CD4-positive, alpha-beta memory T cell (primary cell): ENCODE measurements at regions of chr15 and their contacts with region 1.

Region 1: GRCh38 chr15:99717161-99718009 is 15.9 kb downstream of the LYSMD4 start:
- DNase-seq: no peak
- H3K4me3 ChIP-seq: no peak overlapping the region
- H3K4me3 Mint-ChIP-seq: no peak overlapping the region
- H3K27ac ChIP-seq: no peak overlapping the region
- H3K27ac Mint-ChIP-seq: peak overlapping the region in 1 of 7 donors; percentile 24
- H3K4me1 ChIP-seq: peaks cover 23% of the 10 kb centered on the region
- H3K4me1 Mint-ChIP-seq: peaks cover 23 to 32% (median 29%) of the 10 kb centered on the region in 4 donors
- H3K27me3 ChIP-seq: no peaks in the 10 kb centered on the region
- H3K27me3 Mint-ChIP-seq: no peaks in the 10 kb centered on the region

Region 2: GRCh38 chr15:99733268-99734039 is 16.1 kb after region 1 on chr15 and contains the start of gene LYSMD4:
- CTCF ChIA-PET with region 1: interaction called, 8 read pairs
- POLR2A ChIA-PET with region 1: interaction called, 13 read pairs
- intact Hi-C with region 1: no loop called
- DNase-seq: peak; percentile 95 to 97 (median 96)
- H3K4me3 ChIP-seq: peak within 1 kb of the TSS; percentile 6 to 67
- H3K4me3 Mint-ChIP-seq: peak within 1 kb of the TSS; percentile 83 to 95 (median 87)
- H3K27ac ChIP-seq: peak within 1 kb of the TSS; percentile 46
- H3K27ac Mint-ChIP-seq: peak within 1 kb of the TSS; percentile 80 to 97 (median 88)
- H3K4me1 ChIP-seq: peaks cover 14% of the 10 kb centered on the region
- H3K4me1 Mint-ChIP-seq: peaks cover 12 to 24% (median 16%) of the 10 kb centered on the region in 4 donors
- H3K27me3 ChIP-seq: no peaks in the 10 kb centered on the region
- H3K27me3 Mint-ChIP-seq: no peaks in the 10 kb centered on the region
- total RNA-seq, gene LYSMD4: 18.0 to 19.0 TPM